PC-3 (cell line): ENCODE measurements at regions of chr1 and their contacts with region 1.

Region 1: GRCh38 chr1:72282271-72283021 is at the start of gene NEGR1:
- DNase-seq: peak; percentile 89
- ATAC-seq: peak; percentile 63
- H3K4me3 ChIP-seq: peak within 1 kb of the TSS; percentile 95
- H3K27ac ChIP-seq: peak within 1 kb of the TSS; percentile 83
- H3K4me1 ChIP-seq: peaks cover 49% of the 10 kb centered on the region
- H3K27me3 ChIP-seq: no peaks in the 10 kb centered on the region
- CTCF ChIP-seq: no peak
- total RNA-seq, gene NEGR1: 1.7 and 3.4 TPM in 2 replicates

Region 2: GRCh38 chr1:71196685-71197084 is 1085.8 kb before region 1 on chr1:
- CTCF ChIA-PET with region 1: interaction called, 7 read pairs
- POLR2A ChIA-PET with region 1: no interaction called
- intact Hi-C with region 1: loop called (anchors 10 kb)
- DNase-seq: peak; percentile 55
- ATAC-seq: peak; percentile 46
- H3K4me3 ChIP-seq: no peak overlapping the region
- H3K27ac ChIP-seq: no peak overlapping the region
- H3K4me1 ChIP-seq: no peaks in the 10 kb centered on the region
- H3K27me3 ChIP-seq: 0 out of 2 replicates have a peak, but pooled peaks cover 8% of the 10 kb centered on the region
- CTCF ChIP-seq: peak; percentile 70

Region 3: GRCh38 chr1:71850936-71851335 is 431.5 kb before region 1 on chr1:
- CTCF ChIA-PET with region 1: no interaction called
- POLR2A ChIA-PET with region 1: no interaction called
- intact Hi-C with region 1: no loop called
- DNase-seq: no peak
- ATAC-seq: no peak
- H3K4me3 ChIP-seq: no peak overlapping the region
- H3K27ac ChIP-seq: no peak overlapping the region
- H3K4me1 ChIP-seq: no peaks in the 10 kb centered on the region
- H3K27me3 ChIP-seq: no peaks in the 10 kb centered on the region
- CTCF ChIP-seq: no peak

Region 4: GRCh38 chr1:72062584-72062983 is 219.9 kb before region 1 on chr1:
- CTCF ChIA-PET with region 1: no interaction called
- POLR2A ChIA-PET with region 1: no interaction called
- intact Hi-C with region 1: loop called (anchors 10 kb)
- DNase-seq: no peak
- ATAC-seq: no peak
- H3K4me3 ChIP-seq: no peak overlapping the region
- H3K27ac ChIP-seq: no peak overlapping the region
- H3K4me1 ChIP-seq: peaks cover 7% of the 10 kb centered on the region
- H3K27me3 ChIP-seq: no peaks in the 10 kb centered on the region
- CTCF ChIP-seq: no peak

Region 5: DNA sequence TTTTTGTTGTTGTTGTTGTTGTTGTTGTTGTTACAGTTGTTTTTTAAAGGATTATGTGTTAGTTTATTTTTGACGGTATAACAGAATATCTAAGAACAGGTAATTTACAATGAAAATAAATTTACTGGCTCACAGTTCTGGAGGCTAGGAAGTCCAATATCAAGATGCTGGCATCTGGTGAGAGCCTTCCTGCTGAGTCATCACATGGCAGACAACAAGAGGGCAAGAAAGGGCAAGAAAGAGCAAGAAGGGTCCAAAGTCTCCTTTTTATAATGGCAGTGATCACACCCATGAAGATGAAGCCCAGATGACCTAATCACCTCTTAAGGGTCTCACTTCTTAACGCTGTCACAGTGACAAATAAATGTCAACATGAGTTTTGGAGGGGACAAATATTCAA is 142.2 kb before region 1 on chr1:
- CTCF ChIA-PET with region 1: no interaction called
- POLR2A ChIA-PET with region 1: no interaction called
- intact Hi-C with region 1: no loop called
- DNase-seq: no peak
- ATAC-seq: no peak
- H3K4me3 ChIP-seq: no peak overlapping the region
- H3K27ac ChIP-seq: no peak overlapping the region
- H3K4me1 ChIP-seq: no peaks in the 10 kb centered on the region
- H3K27me3 ChIP-seq: no peaks in the 10 kb centered on the region
- CTCF ChIP-seq: no peak

Region 6: GRCh38 chr1:72230746-72231145 is 51.7 kb before region 1 on chr1:
- CTCF ChIA-PET with region 1: no interaction called
- POLR2A ChIA-PET with region 1: interaction called, 3 read pairs
- intact Hi-C with region 1: loop called (anchors 1 kb)
- DNase-seq: peak; percentile 96
- ATAC-seq: peak; percentile 73
- H3K4me3 ChIP-seq: peak overlapping the region; percentile 31; the same call in 1 of the 2 replicates
- H3K27ac ChIP-seq: peak overlapping the region; percentile 92
- H3K4me1 ChIP-seq: peaks cover 37% of the 10 kb centered on the region
- H3K27me3 ChIP-seq: no peaks in the 10 kb centered on the region
- CTCF ChIP-seq: no peak

Region 7: DNA sequence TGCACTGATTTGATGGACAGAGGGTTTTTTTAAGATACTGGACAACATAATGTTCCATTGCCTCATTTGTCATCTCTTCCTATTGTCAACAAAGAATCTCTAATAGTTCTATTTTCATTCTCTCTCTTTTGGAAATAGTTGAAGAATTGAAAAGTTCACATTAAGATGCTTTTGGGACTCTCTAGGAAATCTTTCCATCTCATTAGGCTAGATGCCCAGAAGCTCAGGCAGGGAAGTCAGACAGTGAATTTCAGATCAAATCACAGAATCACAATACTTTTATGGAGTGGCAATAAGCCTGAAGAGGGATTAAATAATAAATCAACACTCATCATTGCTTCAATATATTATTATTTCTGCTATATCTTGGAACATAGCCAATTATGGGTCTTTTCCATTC is 29.3 kb before region 1 on chr1:
- CTCF ChIA-PET with region 1: no interaction called
- POLR2A ChIA-PET with region 1: no interaction called
- intact Hi-C with region 1: no loop called
- DNase-seq: no peak
- ATAC-seq: no peak
- H3K4me3 ChIP-seq: no peak overlapping the region
- H3K27ac ChIP-seq: no peak overlapping the region
- H3K4me1 ChIP-seq: peaks cover 9% of the 10 kb centered on the region; the same call in 1 of the 2 replicates
- H3K27me3 ChIP-seq: no peaks in the 10 kb centered on the region
- CTCF ChIP-seq: no peak

Region 8: GRCh38 chr1:72489801-72490200 is 207.4 kb after region 1 on chr1:
- CTCF ChIA-PET with region 1: no interaction called
- POLR2A ChIA-PET with region 1: no interaction called
- intact Hi-C with region 1: no loop called
- DNase-seq: no peak
- ATAC-seq: peak; percentile 79
- H3K4me3 ChIP-seq: no peak overlapping the region
- H3K27ac ChIP-seq: no peak overlapping the region
- H3K4me1 ChIP-seq: no peaks in the 10 kb centered on the region
- H3K27me3 ChIP-seq: no peaks in the 10 kb centered on the region
- CTCF ChIP-seq: no peak

Region 9: DNA sequence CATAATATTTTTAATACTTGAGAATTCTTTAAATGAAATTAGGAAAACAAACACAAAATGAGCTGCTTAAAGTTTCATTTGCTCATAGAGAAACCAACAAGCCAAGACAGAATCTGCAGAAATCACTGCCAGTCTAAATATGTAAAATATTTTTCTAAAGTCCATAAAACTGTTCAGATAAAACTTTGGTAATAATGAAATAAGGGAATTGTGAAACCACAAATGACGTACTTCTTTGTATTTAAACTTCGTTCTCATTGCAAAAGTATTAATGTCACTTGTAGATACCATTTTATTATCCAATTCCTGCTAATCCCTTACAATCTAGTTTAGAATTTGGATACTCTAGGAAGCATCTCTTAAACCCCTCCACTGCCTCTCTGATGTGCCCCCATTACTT is 234.4 kb after region 1 on chr1:
- CTCF ChIA-PET with region 1: no interaction called
- POLR2A ChIA-PET with region 1: interaction called, 7 read pairs
- intact Hi-C with region 1: loop called (anchors 2 kb)
- DNase-seq: no peak
- ATAC-seq: no peak
- H3K4me3 ChIP-seq: no peak overlapping the region
- H3K27ac ChIP-seq: no peak overlapping the region
- H3K4me1 ChIP-seq: peaks cover 8% of the 10 kb centered on the region
- H3K27me3 ChIP-seq: no peaks in the 10 kb centered on the region
- CTCF ChIP-seq: no peak

Region 10: DNA sequence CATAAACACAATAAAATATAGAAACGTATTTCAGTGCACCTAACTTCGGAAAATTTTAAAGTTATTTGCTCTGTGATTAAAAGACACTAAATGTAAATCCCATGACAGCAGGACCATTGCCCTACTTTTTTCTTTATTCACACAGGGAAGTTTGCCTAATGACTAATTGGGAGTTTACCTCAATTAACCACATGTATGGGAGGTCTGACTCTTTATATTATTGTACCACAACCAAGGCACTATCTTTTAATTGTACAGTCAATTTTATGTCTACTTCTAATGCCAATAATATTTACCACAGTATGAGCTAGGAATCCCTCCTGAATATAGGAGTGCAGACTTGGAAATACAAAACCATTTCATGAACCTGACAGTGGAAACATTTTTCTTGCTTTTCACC is 360.7 kb after region 1 on chr1:
- CTCF ChIA-PET with region 1: no interaction called
- POLR2A ChIA-PET with region 1: no interaction called
- intact Hi-C with region 1: loop called (anchors 1 kb)
- DNase-seq: peak; percentile 75
- ATAC-seq: peak; percentile 91
- H3K4me3 ChIP-seq: peak overlapping the region; percentile 13; the same call in 1 of the 2 replicates
- H3K27ac ChIP-seq: peak overlapping the region; percentile 30
- H3K4me1 ChIP-seq: peaks cover 18% of the 10 kb centered on the region
- H3K27me3 ChIP-seq: no peaks in the 10 kb centered on the region
- CTCF ChIP-seq: no peak

Region 11: DNA sequence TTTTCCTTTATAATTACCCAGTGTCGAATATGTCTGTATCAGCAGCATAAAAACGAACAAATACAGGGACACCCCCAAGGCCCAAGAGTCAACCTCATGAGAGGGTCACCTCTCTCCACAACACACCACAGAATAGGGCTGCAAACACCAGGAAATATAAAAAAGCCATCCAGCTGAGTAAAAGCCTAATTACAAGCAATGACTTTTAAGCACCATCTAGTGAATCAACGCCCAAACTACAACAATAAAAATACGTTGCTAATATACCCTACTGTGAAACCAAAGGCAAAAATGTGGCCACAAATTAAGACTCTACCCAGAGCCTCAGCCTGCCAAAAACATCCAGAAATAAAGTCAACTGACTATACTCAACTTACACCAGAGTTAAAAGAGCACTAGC is 817.8 kb after region 1 on chr1:
- CTCF ChIA-PET with region 1: interaction called, 3 read pairs
- POLR2A ChIA-PET with region 1: no interaction called
- intact Hi-C with region 1: loop called (anchors 10 kb)
- DNase-seq: peak; percentile 42
- ATAC-seq: peak; percentile 80
- H3K4me3 ChIP-seq: no peak overlapping the region
- H3K27ac ChIP-seq: no peak overlapping the region
- H3K4me1 ChIP-seq: no peaks in the 10 kb centered on the region
- H3K27me3 ChIP-seq: no peaks in the 10 kb centered on the region; the same call in 1 of the 2 replicates
- CTCF ChIP-seq: peak; percentile 55; the same call in 1 of the 2 replicates